Left ventricle myocardium superior (tissue), 1 donor: ENCODE measurements at regions of chr7 and their contacts with region 1.

Region 1: DNA sequence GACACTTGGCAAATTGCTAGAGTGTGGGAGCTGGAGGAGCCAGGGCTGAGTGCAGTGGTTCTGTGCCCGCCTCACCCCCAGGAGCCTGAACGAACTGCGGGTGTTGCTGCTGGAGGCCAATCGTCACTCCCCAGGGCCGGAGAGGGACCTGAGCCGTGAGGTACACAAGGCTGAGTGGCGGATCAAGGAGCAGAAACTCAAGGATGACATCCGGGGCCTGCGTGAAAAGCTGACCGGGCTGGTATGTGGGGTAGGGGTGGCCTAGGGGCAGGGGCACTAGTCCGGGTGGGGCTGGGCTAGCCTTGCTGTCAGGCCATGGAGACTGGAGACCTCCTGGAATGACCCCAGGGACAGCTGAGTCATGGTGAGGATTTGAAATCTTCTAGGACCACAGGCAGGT is 56.7 kb upstream of the GTF2IRD1 start:
- DNase-seq: no peak
- ATAC-seq: no peak

Region 2: DNA sequence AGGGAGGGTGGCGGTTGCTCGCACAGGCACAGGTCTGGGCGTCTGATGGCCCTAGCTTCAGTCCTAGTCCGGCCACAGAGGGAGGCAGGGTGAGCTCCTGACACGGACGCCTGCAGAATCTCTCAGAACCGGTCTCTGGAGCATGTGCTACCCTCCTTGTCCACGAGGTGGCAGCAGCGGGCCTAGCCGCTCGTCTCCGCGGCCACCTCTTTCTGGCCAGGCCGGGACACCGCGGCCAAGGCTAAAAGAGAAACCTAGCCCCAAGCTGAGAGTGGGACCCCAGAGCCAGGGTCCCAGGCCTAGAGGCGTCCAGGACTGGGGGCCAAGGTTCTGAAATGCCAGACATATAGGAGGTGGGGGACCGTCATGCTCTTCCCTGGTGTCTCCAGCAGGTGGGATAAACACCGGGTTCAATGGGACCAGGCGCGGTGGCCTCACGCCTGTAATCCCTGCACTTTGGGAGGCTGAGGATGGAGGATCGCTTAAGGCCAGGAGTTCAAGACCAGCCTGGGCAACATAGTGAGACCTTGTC is 190.3 kb before region 1 on chr7:
- intact Hi-C with region 1: loop called (anchors 5 kb)
- DNase-seq: peak; percentile 93
- ATAC-seq: peak; percentile 83

Region 3: GRCh38 chr7:74256491-74257408 is 140.2 kb before region 1 on chr7:
- intact Hi-C with region 1: loop called (anchors 5 kb)
- DNase-seq: no peak
- ATAC-seq: no peak